GM12878 (cell line): ENCODE measurements at regions of chr6 and their contacts with region 1.

Region 1: DNA sequence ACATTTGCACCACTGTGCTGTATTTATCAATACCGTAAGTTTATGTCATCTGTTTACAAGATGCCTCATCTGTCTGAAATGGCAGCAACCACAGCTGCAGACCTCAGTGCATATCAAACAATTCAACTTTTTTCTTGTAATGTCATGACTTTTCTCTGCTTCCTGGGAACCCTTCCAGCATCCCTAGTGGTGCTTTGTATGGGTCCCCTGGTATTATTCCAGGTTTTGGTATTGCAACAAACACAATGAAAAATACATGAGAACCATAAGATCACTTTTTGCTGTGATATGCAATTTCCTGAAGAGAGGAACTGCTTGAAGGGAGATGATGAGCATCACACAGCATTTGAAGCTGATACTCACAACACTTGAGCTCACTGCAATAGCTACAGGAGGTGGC is 12.0 kb upstream of the TXNDC5 start:
- DNase-seq: no peak
- ATAC-seq: no peak
- H3K4me3 ChIP-seq: no peak overlapping the region
- H3K27ac ChIP-seq: no peak overlapping the region
- H3K4me1 ChIP-seq: peaks cover 12% of the 10 kb centered on the region
- H3K27me3 ChIP-seq: no peaks in the 10 kb centered on the region; a peak in 2 of 4 replicates
- CTCF ChIP-seq: no peak
- EP300 ChIP-seq: no peak
- POLR2A ChIP-seq: no peak
- RAD21 ChIP-seq: no peak

Region 2: DNA sequence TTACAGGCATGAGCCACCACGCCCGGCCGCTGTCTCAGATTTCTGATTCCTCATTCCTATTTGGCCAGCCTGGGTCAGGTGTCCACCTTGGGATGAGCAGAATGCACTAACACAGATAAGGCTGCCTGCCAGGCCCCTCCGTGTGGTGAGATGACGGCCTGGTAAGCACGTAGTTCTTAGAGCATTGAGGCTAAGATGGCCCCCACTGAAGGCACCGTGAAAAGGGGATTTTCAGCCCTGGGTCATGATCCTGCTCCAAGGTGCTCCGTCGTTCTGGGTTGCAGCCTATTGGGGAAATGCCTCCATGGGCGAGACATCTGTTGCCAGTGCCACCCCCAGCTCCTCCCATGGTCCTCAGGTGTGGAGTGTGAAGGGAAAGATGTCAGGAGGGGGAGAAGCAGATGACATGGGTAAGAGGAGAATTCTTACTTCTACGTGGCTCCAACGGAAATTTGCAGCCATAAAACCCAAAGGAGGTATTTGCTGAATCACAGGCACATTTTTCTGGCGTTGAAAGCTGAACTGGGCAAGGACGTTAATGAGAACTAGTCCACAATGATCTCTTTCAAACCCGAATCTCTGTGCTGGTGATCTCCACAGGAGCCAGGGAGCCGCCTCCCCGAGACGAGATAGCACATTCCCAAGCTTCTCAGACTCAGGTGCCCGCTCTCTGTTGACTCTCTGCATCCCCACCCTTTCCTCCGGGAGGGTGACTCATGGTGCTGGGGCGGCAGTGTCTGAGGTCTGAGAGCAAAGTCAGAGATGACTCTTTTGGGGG is 230.7 kb before region 1 on chr6:
- CTCF ChIA-PET with region 1: no interaction called
- POLR2A ChIA-PET with region 1: no interaction called
- RAD21 ChIA-PET with region 1: no interaction called
- SMC1A ChIA-PET with region 1: no interaction called
- in situ Hi-C with region 1: no loop called
- intact Hi-C with region 1: no loop called
- DNase-seq: no peak
- ATAC-seq: no peak
- H3K4me3 ChIP-seq: no peak overlapping the region
- H3K27ac ChIP-seq: no peak overlapping the region
- H3K4me1 ChIP-seq: no peaks in the 10 kb centered on the region
- H3K27me3 ChIP-seq: no peaks in the 10 kb centered on the region; a peak in 1 of 4 replicates
- CTCF ChIP-seq: no peak
- EP300 ChIP-seq: no peak
- POLR2A ChIP-seq: no peak
- RAD21 ChIP-seq: no peak

Region 3: GRCh38 chr6:7954477-7955200 is 32.0 kb after region 1 on chr6:
- CTCF ChIA-PET with region 1: no interaction called
- POLR2A ChIA-PET with region 1: no interaction called
- RAD21 ChIA-PET with region 1: no interaction called
- SMC1A ChIA-PET with region 1: no interaction called
- in situ Hi-C with region 1: no loop called
- intact Hi-C with region 1: loop called (anchors 1 kb)
- DNase-seq: no peak
- ATAC-seq: no peak
- H3K4me3 ChIP-seq: no peak overlapping the region
- H3K27ac ChIP-seq: no peak overlapping the region
- H3K4me1 ChIP-seq: no peaks in the 10 kb centered on the region
- H3K27me3 ChIP-seq: no peaks in the 10 kb centered on the region; a peak in 1 of 4 replicates
- CTCF ChIP-seq: no peak
- EP300 ChIP-seq: no peak
- POLR2A ChIP-seq: no peak
- RAD21 ChIP-seq: no peak